HCT116 (cell line): ENCODE measurements at regions of chr16 and their contacts with region 1.

Region 1: DNA sequence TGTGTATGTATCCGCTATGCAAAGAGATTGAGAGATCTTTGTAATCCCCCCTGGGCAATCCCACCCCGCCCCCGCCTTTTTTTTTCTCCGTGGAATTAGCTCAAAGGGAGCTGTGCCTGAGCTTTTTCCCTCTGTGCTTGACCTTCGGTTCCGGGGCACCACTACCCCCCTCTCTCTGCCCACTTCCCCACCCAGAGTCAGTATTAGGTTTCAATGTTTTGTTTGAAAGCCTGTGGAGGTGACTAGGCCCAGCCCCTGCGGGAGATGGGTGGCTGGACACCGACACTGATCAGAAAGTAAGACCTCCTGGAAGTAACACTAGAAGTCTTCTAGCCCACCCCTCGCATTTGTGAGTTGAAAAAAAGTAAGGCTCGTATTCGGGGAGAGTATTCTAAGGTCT is 7.0 kb downstream of the CBLN1 start:
- DNase-seq: no peak
- ATAC-seq: no peak
- H3K4me3 ChIP-seq: no peak overlapping the region
- H3K27ac ChIP-seq: no peak overlapping the region
- H3K4me1 ChIP-seq: no peaks in the 10 kb centered on the region
- H3K27me3 ChIP-seq: peaks cover 30% of the 10 kb centered on the region
- CTCF ChIP-seq: no peak
- POLR2A ChIP-seq: no peak
- RAD21 ChIP-seq: no peak

Region 2: GRCh38 chr16:48911700-48912099 is 362.9 kb before region 1 on chr16:
- CTCF ChIA-PET with region 1: no interaction called
- POLR2A ChIA-PET with region 1: no interaction called
- RAD21 ChIA-PET with region 1: no interaction called
- intact Hi-C with region 1: no loop called
- DNase-seq: peak; percentile 12
- ATAC-seq: peak; percentile 68
- H3K4me3 ChIP-seq: no peak overlapping the region
- H3K27ac ChIP-seq: no peak overlapping the region
- H3K4me1 ChIP-seq: no peaks in the 10 kb centered on the region
- H3K27me3 ChIP-seq: no peaks in the 10 kb centered on the region
- CTCF ChIP-seq: peak; percentile 33 to 63 (median 40); a peak in 5 of 6 replicates
- POLR2A ChIP-seq: no peak
- RAD21 ChIP-seq: peak; percentile 53

Region 3: DNA sequence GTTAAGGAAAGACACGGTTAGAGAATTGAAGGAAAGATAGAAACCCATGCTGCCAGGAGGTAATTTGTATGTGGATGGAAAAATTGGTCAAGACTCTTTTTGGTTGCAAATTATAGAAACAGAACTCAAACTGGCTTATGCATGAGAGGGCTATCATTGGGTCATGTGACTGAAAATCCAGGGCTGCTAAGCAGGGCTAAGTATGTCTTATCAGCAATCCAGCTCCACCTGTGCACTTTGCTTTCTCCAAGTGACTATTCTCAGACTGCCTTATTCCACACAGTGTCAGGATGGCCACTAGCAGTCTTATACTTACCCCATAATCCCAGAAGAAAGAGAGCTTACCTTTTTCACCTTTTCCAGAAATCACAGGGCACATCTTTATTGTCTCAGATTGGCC is 106.5 kb before region 1 on chr16:
- CTCF ChIA-PET with region 1: no interaction called
- POLR2A ChIA-PET with region 1: no interaction called
- RAD21 ChIA-PET with region 1: no interaction called
- intact Hi-C with region 1: no loop called
- DNase-seq: no peak
- ATAC-seq: no peak
- H3K4me3 ChIP-seq: no peak overlapping the region
- H3K27ac ChIP-seq: no peak overlapping the region
- H3K4me1 ChIP-seq: no peaks in the 10 kb centered on the region
- H3K27me3 ChIP-seq: peaks cover 43% of the 10 kb centered on the region
- CTCF ChIP-seq: no peak
- POLR2A ChIP-seq: no peak
- RAD21 ChIP-seq: no peak

Region 4: DNA sequence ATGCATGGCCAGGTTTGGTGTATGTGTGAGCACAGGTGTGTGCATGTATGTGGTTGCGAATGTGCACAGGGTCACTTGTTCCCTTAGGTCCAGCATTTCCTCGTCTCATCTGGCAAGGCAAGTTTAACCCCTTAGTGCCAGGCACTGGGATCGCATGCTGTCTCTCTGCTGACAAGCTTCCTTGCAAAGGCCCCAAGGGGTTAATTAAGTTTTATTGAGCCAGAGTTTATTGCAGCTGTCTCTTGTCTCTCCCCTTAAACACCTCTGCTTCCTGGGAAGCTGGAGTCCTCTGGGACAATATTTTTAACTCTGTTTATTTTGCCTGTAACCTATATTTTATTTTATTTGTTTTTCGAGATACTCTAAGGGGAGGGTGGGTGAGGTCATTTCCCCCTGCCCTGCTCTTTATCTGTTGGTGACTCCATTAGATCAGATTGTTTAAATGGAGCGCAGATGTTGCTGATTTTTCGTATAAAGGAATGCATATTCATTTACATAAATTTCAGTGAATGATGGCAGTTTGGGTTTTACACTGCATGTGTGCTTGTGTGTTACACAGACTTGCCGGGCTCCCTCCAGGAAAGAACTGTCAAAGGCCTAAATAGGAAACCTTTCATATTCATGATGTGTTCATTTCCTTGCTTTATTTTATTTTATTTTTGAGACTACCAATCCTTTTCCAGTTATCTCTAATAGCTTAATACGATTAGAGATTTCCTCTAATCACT is 92.6 kb before region 1 on chr16:
- CTCF ChIA-PET with region 1: no interaction called
- POLR2A ChIA-PET with region 1: no interaction called
- RAD21 ChIA-PET with region 1: no interaction called
- intact Hi-C with region 1: no loop called
- DNase-seq: no peak
- ATAC-seq: no peak
- H3K4me3 ChIP-seq: no peak overlapping the region
- H3K27ac ChIP-seq: no peak overlapping the region
- H3K4me1 ChIP-seq: no peaks in the 10 kb centered on the region
- H3K27me3 ChIP-seq: peaks cover 26% of the 10 kb centered on the region
- CTCF ChIP-seq: no peak
- POLR2A ChIP-seq: no peak
- RAD21 ChIP-seq: no peak

Region 5: GRCh38 chr16:49324703-49325102 is 50.1 kb after region 1 on chr16:
- CTCF ChIA-PET with region 1: no interaction called
- POLR2A ChIA-PET with region 1: no interaction called
- RAD21 ChIA-PET with region 1: no interaction called
- intact Hi-C with region 1: loop called (anchors 5 kb)
- DNase-seq: no peak
- ATAC-seq: no peak
- H3K4me3 ChIP-seq: no peak overlapping the region
- H3K27ac ChIP-seq: no peak overlapping the region
- H3K4me1 ChIP-seq: no peaks in the 10 kb centered on the region
- H3K27me3 ChIP-seq: peaks cover 55% of the 10 kb centered on the region
- CTCF ChIP-seq: no peak
- POLR2A ChIP-seq: no peak
- RAD21 ChIP-seq: no peak